CD8-positive, alpha-beta T cell (primary cell): ENCODE measurements at regions of chr12 and their contacts with region 1.

Region 1: GRCh38 chr12:120086801-120087621 is 29.5 kb downstream of the RAB35 start:
- DNase-seq: peak; percentile 99 to 100 (median 99)
- ATAC-seq: peak; percentile 94
- H3K4me3 ChIP-seq: peak overlapping the region; percentile 54 to 55
- H3K4me3 Mint-ChIP-seq: peak overlapping the region; percentile 81
- H3K27ac ChIP-seq: peak overlapping the region; percentile 36 to 77
- H3K27ac Mint-ChIP-seq: peak overlapping the region; percentile 88
- H3K4me1 ChIP-seq: peaks cover 12% of the 10 kb centered on the region
- H3K4me1 Mint-ChIP-seq: peaks cover 11% of the 10 kb centered on the region
- H3K27me3 ChIP-seq: no peaks in the 10 kb centered on the region
- H3K27me3 Mint-ChIP-seq: no peaks in the 10 kb centered on the region
- CTCF ChIP-seq: peak; percentile 82

Region 2: GRCh38 chr12:119876761-119877638 is 210.0 kb before region 1 on chr12 and contains the start of gene CIT:
- CTCF ChIA-PET with region 1: no interaction called
- POLR2A ChIA-PET with region 1: no interaction called
- intact Hi-C with region 1: loop called in 1 of 2 experiments (anchors 1 kb)
- DNase-seq: peak; percentile 64 to 93 (median 83)
- ATAC-seq: peak; percentile 99
- H3K4me3 ChIP-seq: peak within 1 kb of the TSS; percentile 83 to 88
- H3K4me3 Mint-ChIP-seq: peak within 1 kb of the TSS; percentile 86
- H3K27ac ChIP-seq: no peak within 1 kb of the TSS
- H3K27ac Mint-ChIP-seq: peak within 1 kb of the TSS; percentile 53
- H3K4me1 ChIP-seq: no peaks in the 10 kb centered on the region
- H3K4me1 Mint-ChIP-seq: peaks cover 10% of the 10 kb centered on the region
- H3K27me3 ChIP-seq: no peaks in the 10 kb centered on the region
- H3K27me3 Mint-ChIP-seq: no peaks in the 10 kb centered on the region
- CTCF ChIP-seq: no peak
- total RNA-seq, gene CIT: 0.84 to 1.6 TPM

Region 3: GRCh38 chr12:119938049-119938667 is 148.9 kb before region 1 on chr12:
- CTCF ChIA-PET with region 1: interaction called, 4 read pairs
- POLR2A ChIA-PET with region 1: no interaction called
- intact Hi-C with region 1: loop called (anchors 1 kb)
- DNase-seq: peak; percentile 46 to 82 (median 75)
- ATAC-seq: peak; percentile 78
- H3K4me3 ChIP-seq: no peak overlapping the region
- H3K4me3 Mint-ChIP-seq: no peak overlapping the region
- H3K27ac ChIP-seq: no peak overlapping the region
- H3K27ac Mint-ChIP-seq: no peak overlapping the region
- H3K4me1 ChIP-seq: no peaks in the 10 kb centered on the region
- H3K4me1 Mint-ChIP-seq: peaks cover 2% of the 10 kb centered on the region
- H3K27me3 ChIP-seq: no peaks in the 10 kb centered on the region
- H3K27me3 Mint-ChIP-seq: peaks cover 3% of the 10 kb centered on the region
- CTCF ChIP-seq: peak; percentile 75

Region 4: GRCh38 chr12:120012067-120012621 is 74.9 kb before region 1 on chr12:
- CTCF ChIA-PET with region 1: interaction called, 3 read pairs
- POLR2A ChIA-PET with region 1: interaction called, 12 read pairs
- intact Hi-C with region 1: loop called (anchors 1 kb)
- DNase-seq: peak in 8 of 9 experiments; percentile 23 to 97 (median 71)
- ATAC-seq: peak; percentile 61
- H3K4me3 ChIP-seq: no peak overlapping the region
- H3K4me3 Mint-ChIP-seq: peak overlapping the region; percentile 76
- H3K27ac ChIP-seq: peak overlapping the region; percentile 52 to 73
- H3K27ac Mint-ChIP-seq: peak overlapping the region; percentile 99
- H3K4me1 ChIP-seq: peaks cover 69% of the 10 kb centered on the region
- H3K4me1 Mint-ChIP-seq: peaks cover 83% of the 10 kb centered on the region
- H3K27me3 ChIP-seq: no peaks in the 10 kb centered on the region
- H3K27me3 Mint-ChIP-seq: no peaks in the 10 kb centered on the region
- CTCF ChIP-seq: no peak

Region 5: DNA sequence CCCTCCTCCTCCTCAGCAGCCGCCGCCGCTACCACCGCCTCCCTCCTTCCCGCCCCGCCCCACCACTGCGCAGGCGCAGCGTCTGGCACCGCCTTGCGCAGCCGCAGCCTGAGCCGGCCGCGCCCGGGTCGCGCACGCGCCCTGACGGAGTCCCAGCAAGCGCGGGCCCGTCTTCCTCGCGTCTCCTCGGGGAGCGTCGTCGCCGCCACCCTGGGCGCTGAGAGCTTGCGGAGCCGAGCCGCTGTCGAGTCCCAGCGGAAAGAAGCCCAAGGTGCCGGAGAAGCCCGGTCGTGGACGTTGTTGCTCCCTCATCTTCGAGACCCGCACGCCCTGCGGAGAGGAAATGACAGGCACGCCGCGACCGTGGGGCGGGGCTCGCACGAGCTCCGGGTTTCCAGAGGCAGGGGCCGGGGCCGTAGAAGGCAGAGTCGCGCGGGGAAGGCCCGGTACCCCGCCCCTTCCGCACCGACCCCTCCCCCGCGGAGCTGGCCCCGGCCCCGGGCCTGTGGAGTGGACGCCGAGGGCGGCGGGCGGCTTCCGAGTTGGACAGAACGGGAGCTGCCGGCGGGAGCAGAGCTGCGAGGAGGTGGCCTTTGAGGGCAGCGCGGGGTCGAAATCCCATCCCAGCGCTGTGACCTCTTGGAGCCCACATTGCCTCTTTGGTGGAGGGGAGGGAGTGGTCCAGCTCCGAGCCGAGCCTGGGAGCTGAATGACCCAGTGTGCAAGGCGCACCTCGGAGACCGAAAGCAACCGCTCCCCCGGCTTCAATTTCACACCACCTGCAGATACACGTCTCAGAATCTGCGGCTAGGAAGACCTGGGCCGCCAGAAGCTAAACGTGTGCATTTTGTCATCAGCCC is 30.0 kb after region 1 on chr12:
- CTCF ChIA-PET with region 1: interaction called, 10 read pairs
- POLR2A ChIA-PET with region 1: interaction called, 7 read pairs
- intact Hi-C with region 1: loop called (anchors 1 kb)
- DNase-seq: peak; percentile 95 to 99 (median 97)
- ATAC-seq: peak; percentile 84
- H3K4me3 ChIP-seq: peak overlapping the region; percentile 87 to 90
- H3K4me3 Mint-ChIP-seq: peak overlapping the region; percentile 84
- H3K27ac ChIP-seq: peak overlapping the region; percentile 91 to 95
- H3K27ac Mint-ChIP-seq: peak overlapping the region; percentile 88
- H3K4me1 ChIP-seq: peaks cover 53% of the 10 kb centered on the region
- H3K4me1 Mint-ChIP-seq: peaks cover 73% of the 10 kb centered on the region
- H3K27me3 ChIP-seq: no peaks in the 10 kb centered on the region
- H3K27me3 Mint-ChIP-seq: no peaks in the 10 kb centered on the region
- CTCF ChIP-seq: no peak